Left ventricle myocardium inferior (tissue), 1 donor: ENCODE measurements at regions of chr16 and their contacts with region 1.

Region 1: GRCh38 chr16:19167710-19168370 is at the start of gene SYT17:
- DNase-seq: peak; percentile 67
- H3K4me3 ChIP-seq: peak within 1 kb of the TSS; percentile 72
- H3K27ac ChIP-seq: peak within 1 kb of the TSS; percentile 48
- H3K4me1 ChIP-seq: peaks cover 19% of the 10 kb centered on the region
- H3K27me3 ChIP-seq: peaks cover 49% of the 10 kb centered on the region
- CTCF ChIP-seq: peak; percentile 77
- total RNA-seq, gene SYT17: 0.49 TPM

Region 2: GRCh38 chr16:19113453-19114351 is 54.1 kb before region 1 on chr16 and contains the start of gene ITPRIPL2:
- intact Hi-C with region 1: no loop called
- DNase-seq: peak; percentile 93
- H3K4me3 ChIP-seq: peak within 1 kb of the TSS; percentile 78
- H3K27ac ChIP-seq: peak within 1 kb of the TSS; percentile 96
- H3K4me1 ChIP-seq: peaks cover 60% of the 10 kb centered on the region
- H3K27me3 ChIP-seq: peaks cover 6% of the 10 kb centered on the region
- CTCF ChIP-seq: peak; percentile 23
- total RNA-seq, gene ITPRIPL2: 12.3 TPM

Region 3: GRCh38 chr16:19375561-19376158 is 207.8 kb after region 1 on chr16:
- intact Hi-C with region 1: loop called (anchors 10 kb)
- DNase-seq: no peak
- H3K4me3 ChIP-seq: no peak overlapping the region
- H3K27ac ChIP-seq: no peak overlapping the region
- H3K4me1 ChIP-seq: no peaks in the 10 kb centered on the region
- H3K27me3 ChIP-seq: peaks cover 31% of the 10 kb centered on the region
- CTCF ChIP-seq: peak; percentile 89